ENCODE measurements at regions of chr14 and their contacts with region 1.

Region 1: DNA sequence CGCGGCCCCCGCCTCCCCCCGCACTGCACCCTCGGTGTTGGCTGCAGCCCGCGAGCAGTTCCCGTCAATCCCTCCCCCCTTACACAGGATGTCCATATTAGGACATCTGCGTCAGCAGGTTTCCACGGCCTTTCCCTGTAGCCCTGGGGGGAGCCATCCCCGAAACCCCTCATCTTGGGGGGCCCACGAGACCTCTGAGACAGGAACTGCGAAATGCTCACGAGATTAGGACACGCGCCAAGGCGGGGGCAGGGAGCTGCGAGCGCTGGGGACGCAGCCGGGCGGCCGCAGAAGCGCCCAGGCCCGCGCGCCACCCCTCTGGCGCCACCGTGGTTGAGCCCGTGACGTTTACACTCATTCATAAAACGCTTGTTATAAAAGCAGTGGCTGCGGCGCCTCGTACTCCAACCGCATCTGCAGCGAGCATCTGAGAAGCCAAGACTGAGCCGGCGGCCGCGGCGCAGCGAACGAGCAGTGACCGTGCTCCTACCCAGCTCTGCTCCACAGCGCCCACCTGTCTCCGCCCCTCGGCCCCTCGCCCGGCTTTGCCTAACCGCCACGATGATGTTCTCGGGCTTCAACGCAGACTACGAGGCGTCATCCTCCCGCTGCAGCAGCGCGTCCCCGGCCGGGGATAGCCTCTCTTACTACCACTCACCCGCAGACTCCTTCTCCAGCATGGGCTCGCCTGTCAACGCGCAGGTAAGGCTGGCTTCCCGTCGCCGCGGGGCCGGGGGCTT is at the start of gene FOS:
- DNase-seq: peak; percentile 95
- H3K4me3 Mint-ChIP-seq: peak within 1 kb of the TSS; percentile 88
- H3K27ac Mint-ChIP-seq: peak within 1 kb of the TSS; percentile 99
- H3K4me1 Mint-ChIP-seq: peaks cover 31% of the 10 kb centered on the region
- H3K27me3 Mint-ChIP-seq: peaks cover 11% of the 10 kb centered on the region
- CTCF ChIP-seq: no peak
- total RNA-seq, gene FOS: 73.1 and 139 TPM in 2 replicates

Region 2: DNA sequence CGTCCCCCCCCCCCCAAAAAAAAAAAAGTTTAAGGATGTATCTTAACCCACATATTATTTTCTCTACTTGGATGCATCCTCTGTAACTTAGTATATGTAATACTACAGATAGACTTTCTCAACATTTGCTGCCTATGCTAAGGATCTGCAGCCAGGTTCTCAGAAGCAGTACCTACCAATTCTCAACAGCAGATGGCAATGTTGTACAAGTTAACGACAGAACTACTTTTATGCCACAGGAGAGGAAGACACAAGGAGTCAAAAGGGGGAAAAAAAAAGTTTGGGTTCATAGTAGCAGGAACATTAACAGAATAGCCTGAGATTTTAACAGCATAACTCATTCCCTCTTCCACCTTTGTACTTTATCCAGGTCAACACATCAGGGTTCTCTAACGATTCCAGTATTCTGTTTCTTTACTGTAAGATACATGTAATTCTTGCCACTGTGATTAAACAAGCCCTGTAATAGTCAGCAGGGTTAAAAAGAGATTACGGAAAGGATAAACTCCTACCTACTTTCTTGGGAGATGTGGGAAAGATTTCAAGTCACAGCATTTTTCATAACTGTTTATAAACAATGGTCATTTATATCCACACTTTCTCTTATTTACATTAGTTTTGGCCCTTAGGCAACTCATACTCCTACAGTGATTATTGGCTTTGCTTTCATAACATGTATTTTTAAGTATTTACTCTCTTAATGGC is 146.1 kb before region 1 on chr14:
- CTCF ChIA-PET with region 1: interaction called, 15 read pairs
- POLR2A ChIA-PET with region 1: interaction called, 37 read pairs
- intact Hi-C with region 1: loop called (anchors 1 kb)
- DNase-seq: peak; percentile 83
- H3K4me3 Mint-ChIP-seq: no peak overlapping the region
- H3K27ac Mint-ChIP-seq: peak overlapping the region; percentile 77
- H3K4me1 Mint-ChIP-seq: peaks cover 33% of the 10 kb centered on the region
- H3K27me3 Mint-ChIP-seq: no peaks in the 10 kb centered on the region
- CTCF ChIP-seq: peak; percentile 67

Region 3: DNA sequence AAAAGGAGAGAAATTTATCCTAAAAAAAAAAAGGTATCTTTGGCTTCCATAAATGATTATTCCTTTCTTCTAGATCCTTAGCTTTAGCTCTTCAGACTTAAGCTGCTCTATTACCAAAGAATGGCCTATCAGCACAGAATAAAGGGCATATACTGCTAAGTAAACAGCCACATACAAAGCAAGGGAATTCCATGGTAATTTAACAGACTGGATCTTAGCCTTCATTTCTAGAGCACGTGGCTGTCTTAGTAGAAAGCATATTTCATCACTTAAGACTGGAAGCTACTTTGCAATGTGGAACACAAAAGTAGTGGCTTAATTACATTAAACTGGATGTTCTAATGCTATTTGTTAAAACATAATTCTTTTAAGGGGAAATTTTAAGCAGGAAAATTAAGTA is 125.3 kb before region 1 on chr14:
- CTCF ChIA-PET with region 1: no interaction called
- POLR2A ChIA-PET with region 1: interaction called, 12 read pairs
- intact Hi-C with region 1: loop called (anchors 5 kb)
- DNase-seq: no peak
- H3K4me3 Mint-ChIP-seq: no peak overlapping the region
- H3K27ac Mint-ChIP-seq: peak overlapping the region; percentile 91
- H3K4me1 Mint-ChIP-seq: peaks cover 41% of the 10 kb centered on the region
- H3K27me3 Mint-ChIP-seq: no peaks in the 10 kb centered on the region
- CTCF ChIP-seq: no peak

Region 4: DNA sequence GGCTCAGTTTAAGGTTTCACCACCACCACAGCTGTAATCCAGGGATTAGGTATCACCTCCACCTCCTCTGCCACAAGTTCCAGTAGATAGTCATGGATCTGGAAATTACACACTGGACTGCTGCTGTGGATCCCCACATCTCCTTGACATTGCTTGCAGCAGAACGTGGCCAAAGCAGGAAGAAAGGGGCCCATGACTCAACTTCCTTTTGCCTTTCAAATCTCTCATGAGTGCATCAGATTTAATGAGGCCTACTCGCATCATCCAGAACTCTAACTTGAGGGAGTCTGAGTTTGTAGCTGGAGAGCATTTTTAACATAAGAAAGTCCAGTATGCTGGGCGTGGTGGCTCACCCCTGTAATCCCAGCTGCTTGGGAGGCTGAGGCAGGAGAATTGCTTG is 73.0 kb before region 1 on chr14:
- CTCF ChIA-PET with region 1: no interaction called
- POLR2A ChIA-PET with region 1: interaction called, 10 read pairs
- intact Hi-C with region 1: no loop called
- DNase-seq: peak; percentile 12
- H3K4me3 Mint-ChIP-seq: no peak overlapping the region
- H3K27ac Mint-ChIP-seq: no peak overlapping the region
- H3K4me1 Mint-ChIP-seq: peaks cover 20% of the 10 kb centered on the region
- H3K27me3 Mint-ChIP-seq: no peaks in the 10 kb centered on the region
- CTCF ChIP-seq: no peak

Region 5: GRCh38 chr14:75230140-75231045 is 48.2 kb before region 1 on chr14:
- CTCF ChIA-PET with region 1: interaction called, 7 read pairs
- POLR2A ChIA-PET with region 1: interaction called, 11 read pairs
- intact Hi-C with region 1: loop called (anchors 1 kb)
- DNase-seq: peak; percentile 98
- H3K4me3 Mint-ChIP-seq: peak overlapping the region; percentile 45
- H3K27ac Mint-ChIP-seq: peak overlapping the region; percentile 94
- H3K4me1 Mint-ChIP-seq: peaks cover 44% of the 10 kb centered on the region
- H3K27me3 Mint-ChIP-seq: no peaks in the 10 kb centered on the region
- CTCF ChIP-seq: peak; percentile 29

Region 6: DNA sequence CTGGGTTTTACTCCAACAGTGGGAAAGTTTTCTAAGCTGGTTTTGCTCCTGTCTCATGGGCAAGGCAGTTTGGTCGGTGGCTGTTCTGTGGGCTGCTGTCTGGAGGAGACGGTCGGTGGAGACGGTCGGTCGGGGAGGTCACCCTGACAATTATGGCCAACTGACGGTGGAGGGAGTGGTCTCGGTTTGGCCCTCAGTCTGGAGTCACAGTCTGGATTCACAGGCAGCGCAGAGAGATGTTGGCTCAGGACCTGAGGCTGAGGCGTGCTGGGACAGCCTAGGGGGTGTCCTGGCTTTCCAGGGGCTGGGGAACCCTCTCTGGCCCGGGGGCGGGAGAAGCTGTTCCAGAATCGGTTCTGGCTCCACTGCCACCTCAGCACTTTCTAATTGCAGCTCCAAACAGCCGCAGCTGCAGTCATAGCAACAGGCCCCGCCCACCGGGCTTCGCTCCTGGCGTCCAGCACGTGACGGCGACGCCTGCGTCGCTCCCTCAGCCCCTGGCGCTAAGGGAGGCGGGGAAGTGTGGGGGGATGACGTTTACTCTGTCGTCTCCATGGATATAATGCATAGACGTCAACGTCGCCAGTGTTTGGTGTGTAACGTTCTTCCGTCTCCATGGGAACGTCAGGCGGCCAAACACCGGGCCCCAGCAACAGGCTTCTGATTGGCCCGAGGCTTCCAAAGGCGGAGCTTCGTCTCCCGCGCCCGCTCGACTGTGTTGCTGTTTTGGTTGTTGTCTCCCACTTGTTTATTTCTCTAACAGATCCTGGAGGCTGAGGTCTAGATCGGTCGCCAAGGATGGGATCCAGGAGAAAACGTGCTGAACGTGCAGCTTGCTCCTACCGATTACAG is 19.8 kb before region 1 on chr14:
- CTCF ChIA-PET with region 1: interaction called, 6 read pairs
- POLR2A ChIA-PET with region 1: interaction called, 402 read pairs
- intact Hi-C with region 1: loop called (anchors 1 kb)
- DNase-seq: peak; percentile 99
- H3K4me3 Mint-ChIP-seq: peak overlapping the region; percentile 67
- H3K27ac Mint-ChIP-seq: peak overlapping the region; percentile 100
- H3K4me1 Mint-ChIP-seq: peaks cover 40% of the 10 kb centered on the region
- H3K27me3 Mint-ChIP-seq: no peaks in the 10 kb centered on the region
- CTCF ChIP-seq: no peak

Region 7: GRCh38 chr14:75293920-75294642 is 15.5 kb after region 1 on chr14:
- CTCF ChIA-PET with region 1: interaction called, 26 read pairs
- POLR2A ChIA-PET with region 1: interaction called, 187 read pairs
- intact Hi-C with region 1: loop called (anchors 1 kb)
- DNase-seq: peak; percentile 96
- H3K4me3 Mint-ChIP-seq: peak overlapping the region; percentile 67
- H3K27ac Mint-ChIP-seq: peak overlapping the region; percentile 71
- H3K4me1 Mint-ChIP-seq: peaks cover 22% of the 10 kb centered on the region
- H3K27me3 Mint-ChIP-seq: no peaks in the 10 kb centered on the region
- CTCF ChIP-seq: no peak